ENCODE measurements at regions of chr13 and their contacts with region 1.

Region 1: DNA sequence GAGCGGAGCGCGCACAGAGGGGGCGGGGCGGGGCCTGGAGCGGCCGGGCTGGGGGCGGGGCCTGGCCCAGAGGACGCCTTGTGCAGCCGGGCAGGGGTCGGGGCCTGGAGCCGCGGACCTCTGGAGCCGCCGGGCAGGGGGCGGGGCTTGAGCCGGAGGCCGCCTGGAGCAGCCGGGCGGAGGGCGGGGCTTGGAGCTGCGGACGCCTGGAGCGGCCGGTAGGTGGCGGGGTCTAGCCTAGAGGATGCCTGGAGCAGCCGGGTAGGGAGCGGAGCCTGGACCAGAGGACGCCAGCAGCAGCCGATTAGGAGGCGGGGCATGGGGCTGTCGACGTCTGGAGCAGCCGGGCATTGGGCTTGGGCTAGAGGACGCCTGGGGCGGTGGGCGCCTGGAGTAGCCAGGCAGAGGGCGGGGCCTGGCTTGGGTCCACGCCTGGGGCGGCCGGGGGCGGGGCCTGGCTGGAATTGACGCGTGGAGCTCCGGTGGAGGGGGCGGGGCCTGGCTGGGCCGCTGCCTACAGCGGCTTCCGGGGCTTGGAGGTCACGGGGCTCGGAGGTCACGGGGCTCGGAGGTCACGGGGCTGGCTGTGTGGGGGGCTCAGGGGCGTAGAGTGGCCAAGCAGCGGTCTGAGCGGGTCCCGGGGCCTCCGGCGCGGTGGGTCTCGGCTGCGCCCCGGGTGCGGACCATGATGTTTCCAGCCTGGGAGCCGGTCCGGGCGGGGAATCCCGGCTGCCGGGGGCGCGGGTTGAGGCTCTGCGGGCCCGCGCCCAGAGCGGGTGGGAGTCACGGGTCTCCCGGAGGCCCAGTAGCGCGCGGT is at the start of gene ANKRD10:
- DNase-seq: peak; percentile 97 to 99
- ATAC-seq: peak; percentile 60 to 65
- H3K4me3 ChIP-seq: peak within 1 kb of the TSS; percentile 85 to 97 (median 96)
- H3K27ac ChIP-seq: peak within 1 kb of the TSS; percentile 96 to 100 (median 98)
- H3K4me1 ChIP-seq: peaks cover 37 to 47% of the 10 kb centered on the region in 2 donors
- H3K27me3 ChIP-seq: no peaks in the 10 kb centered on the region
- CTCF ChIP-seq: peak; percentile 77 to 99 (median 93)
- POLR2A ChIP-seq: peak; percentile 90 to 95
- total RNA-seq, gene ANKRD10: 145 to 381 (median 164) TPM

Region 2: GRCh38 chr13:110492679-110493593 is 422.3 kb before region 1 on chr13:
- in situ Hi-C with region 1: no loop called
- intact Hi-C with region 1: no loop called
- DNase-seq: no peak
- ATAC-seq: no peak
- H3K4me3 ChIP-seq: no peak overlapping the region
- H3K27ac ChIP-seq: no peak overlapping the region
- H3K4me1 ChIP-seq: no peaks in the 10 kb centered on the region
- H3K27me3 ChIP-seq: no peaks in the 10 kb centered on the region
- CTCF ChIP-seq: no peak
- POLR2A ChIP-seq: no peak

Region 3: GRCh38 chr13:110615322-110616102 is 299.8 kb before region 1 on chr13 and contains the start of gene NAXD:
- in situ Hi-C with region 1: no loop called
- intact Hi-C with region 1: loop called (anchors 5 kb)
- DNase-seq: peak; percentile 89 to 94
- ATAC-seq: peak; percentile 90 to 92
- H3K4me3 ChIP-seq: peak within 1 kb of the TSS; percentile 68 to 95 (median 81)
- H3K27ac ChIP-seq: peak within 1 kb of the TSS; percentile 80 to 93 (median 90)
- H3K4me1 ChIP-seq: peaks cover 22 to 31% of the 10 kb centered on the region in 2 donors
- H3K27me3 ChIP-seq: peaks cover 2 to 4% (median 2%) of the 10 kb centered on the region in 3 donors
- CTCF ChIP-seq: no peak
- POLR2A ChIP-seq: peak; percentile 83 to 85
- total RNA-seq, gene NAXD: 17.9 to 24.7 (median 21.5) TPM

Region 4: GRCh38 chr13:110715395-110716235 is 199.7 kb before region 1 on chr13:
- in situ Hi-C with region 1: loop called in 2 of 4 experiments (anchors 25 kb)
- intact Hi-C with region 1: loop called (anchors 2 kb)
- DNase-seq: peak; percentile 99
- ATAC-seq: peak; percentile 65 to 72
- H3K4me3 ChIP-seq: peak overlapping the region; percentile 85 to 98 (median 94)
- H3K27ac ChIP-seq: peak overlapping the region; percentile 97 to 100 (median 100)
- H3K4me1 ChIP-seq: peaks cover 25 to 30% of the 10 kb centered on the region in 2 donors
- H3K27me3 ChIP-seq: no peaks in the 10 kb centered on the region
- CTCF ChIP-seq: peak in 3 of 5 experiments; percentile 5 to 33 (median 30)
- POLR2A ChIP-seq: peak; percentile 76

Region 5: DNA sequence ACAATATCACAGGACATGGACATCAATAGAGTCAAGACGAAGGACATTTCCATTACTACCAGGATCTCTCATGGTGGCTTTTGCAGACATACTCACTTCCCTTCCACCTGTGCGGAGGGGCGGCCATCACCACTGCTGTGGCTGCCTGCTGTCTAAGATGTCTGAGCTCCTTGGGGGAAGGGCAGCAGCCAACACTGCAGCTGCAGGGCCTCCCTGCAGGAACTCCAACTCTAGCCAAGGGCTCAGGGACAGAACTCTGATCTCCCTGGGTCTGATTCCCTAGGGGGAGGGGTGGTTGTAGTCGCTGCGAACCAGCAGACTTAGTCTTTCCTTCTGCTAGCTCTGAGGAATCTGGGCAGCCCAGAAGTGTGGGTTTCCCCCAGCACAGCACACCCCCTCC is 78.5 kb after region 1 on chr13:
- in situ Hi-C with region 1: no loop called
- intact Hi-C with region 1: no loop called
- DNase-seq: no peak
- ATAC-seq: no peak
- H3K4me3 ChIP-seq: no peak overlapping the region
- H3K27ac ChIP-seq: no peak overlapping the region
- H3K4me1 ChIP-seq: no peaks in the 10 kb centered on the region
- H3K27me3 ChIP-seq: no peaks in the 10 kb centered on the region
- CTCF ChIP-seq: no peak
- POLR2A ChIP-seq: no peak

Region 6: DNA sequence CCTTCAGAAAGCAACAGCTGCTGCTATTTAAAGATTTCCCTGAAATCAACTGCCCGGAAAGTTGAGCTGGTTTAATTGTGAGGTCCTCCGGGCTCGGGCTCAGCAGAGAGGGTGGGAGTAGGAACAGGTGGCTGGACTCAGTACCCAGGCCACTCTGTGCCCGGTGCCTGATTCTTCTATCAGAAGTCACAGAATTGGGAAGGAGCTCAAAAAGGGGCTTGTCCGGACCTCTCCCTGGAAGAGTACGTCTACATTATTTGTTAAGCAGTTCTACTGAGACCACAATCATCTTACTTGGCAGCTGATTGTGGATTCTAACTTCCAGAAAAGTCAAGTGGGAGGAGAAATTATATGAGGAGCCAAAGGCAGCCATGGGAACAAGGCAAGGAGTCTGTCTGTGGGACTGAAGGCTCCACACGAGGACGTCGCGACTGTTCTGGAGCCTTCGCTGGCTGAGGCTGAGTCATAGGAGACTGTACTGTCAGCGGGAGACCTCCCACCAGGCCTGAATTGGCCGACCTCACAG is 91.3 kb after region 1 on chr13:
- in situ Hi-C with region 1: no loop called
- intact Hi-C with region 1: loop called (anchors 1 kb)
- DNase-seq: peak; percentile 64 to 69
- ATAC-seq: peak; percentile 90 to 92
- H3K4me3 ChIP-seq: peak overlapping the region; percentile 0 to 14 (median 6)
- H3K27ac ChIP-seq: peak overlapping the region; percentile 79 to 98 (median 84)
- H3K4me1 ChIP-seq: peaks cover 16 to 33% of the 10 kb centered on the region in 2 donors
- H3K27me3 ChIP-seq: no peaks in the 10 kb centered on the region
- CTCF ChIP-seq: no peak
- POLR2A ChIP-seq: peak in 1 of 2 donors; percentile 57

Region 7: DNA sequence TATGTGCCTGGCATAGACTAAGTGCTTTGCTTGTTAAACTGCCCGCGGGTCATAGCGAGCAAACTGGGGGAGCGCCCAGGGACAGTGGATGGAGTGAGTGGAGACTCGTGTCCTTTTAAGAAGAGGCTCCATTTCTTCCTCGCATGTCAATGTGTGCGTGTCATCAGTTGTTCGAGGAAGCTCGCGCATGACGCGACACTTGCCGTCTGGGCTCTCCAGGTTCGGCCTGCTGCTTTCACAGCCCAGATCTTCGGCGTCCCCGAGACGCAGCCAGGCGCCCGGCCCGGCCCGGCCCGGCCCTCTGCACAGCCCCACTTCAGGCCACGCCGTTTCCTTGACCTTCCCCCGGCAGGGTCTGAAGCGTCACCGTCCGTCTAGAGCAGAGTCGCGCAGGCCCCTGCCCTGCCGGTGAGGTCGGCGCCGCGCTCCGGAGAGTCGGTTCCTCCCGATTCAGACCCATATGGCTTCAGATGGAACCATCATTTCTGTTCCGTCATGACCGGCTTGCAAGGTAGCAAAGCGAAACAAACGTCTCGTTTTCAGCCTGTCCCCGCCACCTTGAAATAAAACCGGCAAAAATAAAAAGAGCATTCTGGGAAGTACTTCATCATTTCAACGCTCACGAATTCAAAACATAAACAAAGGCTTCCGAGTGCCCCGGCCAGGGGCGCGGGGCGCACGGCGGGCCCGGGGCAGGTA is 199.2 kb after region 1 on chr13:
- in situ Hi-C with region 1: no loop called
- intact Hi-C with region 1: loop called (anchors 5 kb)
- DNase-seq: peak; percentile 36 to 56
- ATAC-seq: peak; percentile 55 to 60
- H3K4me3 ChIP-seq: peak overlapping the region; percentile 63 to 70 (median 70)
- H3K27ac ChIP-seq: peak overlapping the region; percentile 72 to 82 (median 79)
- H3K4me1 ChIP-seq: peaks cover 5 to 12% of the 10 kb centered on the region in 2 donors
- H3K27me3 ChIP-seq: peaks cover 0 to 4% (median 0%) of the 10 kb centered on the region in 3 donors
- CTCF ChIP-seq: no peak
- POLR2A ChIP-seq: peak; percentile 54 to 62

Region 8: GRCh38 chr13:111202745-111203144 is 287.5 kb after region 1 on chr13:
- in situ Hi-C with region 1: loop called in 1 of 4 experiments (anchors 25 kb)
- intact Hi-C with region 1: no loop called
- DNase-seq: no peak
- ATAC-seq: peak; percentile 54 to 70
- H3K4me3 ChIP-seq: peak overlapping the region in 2 of 4 donors; percentile 46 to 49
- H3K27ac ChIP-seq: peak overlapping the region; percentile 45 to 74 (median 68)
- H3K4me1 ChIP-seq: peaks cover 53 to 59% of the 10 kb centered on the region in 2 donors
- H3K27me3 ChIP-seq: no peaks in the 10 kb centered on the region
- CTCF ChIP-seq: no peak
- POLR2A ChIP-seq: peak; percentile 18 to 47

Region 9: DNA sequence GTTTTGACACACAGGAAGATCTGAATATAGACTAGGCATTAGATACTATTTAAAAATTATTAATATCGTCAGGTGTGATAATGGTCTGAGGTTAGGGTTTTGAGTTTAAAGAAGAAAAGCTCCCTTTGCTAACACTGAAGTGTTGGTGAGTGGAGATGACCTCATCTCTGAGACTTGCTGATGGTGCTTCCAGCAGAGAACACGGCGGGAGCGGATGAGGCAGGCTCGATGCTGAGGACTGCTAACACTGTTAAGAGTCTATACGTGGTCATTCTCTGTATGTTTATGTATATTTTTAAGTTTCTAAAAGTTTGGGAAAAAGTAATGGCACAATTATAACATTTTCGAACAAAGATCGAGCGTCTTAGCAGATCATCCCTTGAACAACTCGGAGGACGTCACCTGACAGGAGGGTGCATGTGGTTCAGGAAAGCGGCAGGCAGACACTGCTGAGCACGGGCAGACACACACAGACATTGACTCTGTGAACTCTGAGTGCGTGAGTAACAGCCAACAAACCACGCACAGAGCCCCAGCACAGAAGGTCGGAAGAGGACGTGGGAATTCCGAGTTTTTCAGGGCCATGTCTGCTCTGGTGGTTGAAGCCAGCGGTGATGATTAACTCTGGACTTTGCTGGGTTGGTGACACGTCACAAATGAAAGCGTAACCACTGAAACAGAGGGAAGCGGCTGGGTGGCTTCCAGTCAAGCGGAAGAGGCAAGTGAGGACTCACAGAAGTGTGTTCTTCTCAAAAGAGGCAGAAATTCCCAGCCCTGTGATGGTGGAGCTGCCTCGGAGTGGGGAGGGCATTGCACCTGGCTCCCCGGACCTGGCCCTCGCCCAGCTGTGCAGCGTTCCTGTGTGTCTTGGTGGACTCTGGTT is 313.2 kb after region 1 on chr13:
- in situ Hi-C with region 1: loop called in 3 of 4 experiments (anchors 25 kb)
- intact Hi-C with region 1: no loop called
- DNase-seq: no peak
- ATAC-seq: peak; percentile 56 to 58
- H3K4me3 ChIP-seq: peak overlapping the region in 1 of 4 donors; percentile 10
- H3K27ac ChIP-seq: peak overlapping the region; percentile 33 to 57 (median 50)
- H3K4me1 ChIP-seq: peaks cover 46 to 73% of the 10 kb centered on the region in 2 donors
- H3K27me3 ChIP-seq: no peaks in the 10 kb centered on the region
- CTCF ChIP-seq: no peak
- POLR2A ChIP-seq: no peak

Measured in gastrocnemius medialis (tissue), 4 donors.